ENCODE measurements at regions of chr9 and their contacts with region 1.

Region 1: GRCh38 chr9:121133149-121133816 is 58.5 kb downstream of the CNTRL start:
- DNase-seq: peak; percentile 90
- ATAC-seq: peak; percentile 99
- H3K4me3 Mint-ChIP-seq: peak overlapping the region; percentile 15
- H3K27ac Mint-ChIP-seq: peak overlapping the region; percentile 67
- H3K4me1 Mint-ChIP-seq: peaks cover 48% of the 10 kb centered on the region
- H3K27me3 Mint-ChIP-seq: no peaks in the 10 kb centered on the region

Region 2: DNA sequence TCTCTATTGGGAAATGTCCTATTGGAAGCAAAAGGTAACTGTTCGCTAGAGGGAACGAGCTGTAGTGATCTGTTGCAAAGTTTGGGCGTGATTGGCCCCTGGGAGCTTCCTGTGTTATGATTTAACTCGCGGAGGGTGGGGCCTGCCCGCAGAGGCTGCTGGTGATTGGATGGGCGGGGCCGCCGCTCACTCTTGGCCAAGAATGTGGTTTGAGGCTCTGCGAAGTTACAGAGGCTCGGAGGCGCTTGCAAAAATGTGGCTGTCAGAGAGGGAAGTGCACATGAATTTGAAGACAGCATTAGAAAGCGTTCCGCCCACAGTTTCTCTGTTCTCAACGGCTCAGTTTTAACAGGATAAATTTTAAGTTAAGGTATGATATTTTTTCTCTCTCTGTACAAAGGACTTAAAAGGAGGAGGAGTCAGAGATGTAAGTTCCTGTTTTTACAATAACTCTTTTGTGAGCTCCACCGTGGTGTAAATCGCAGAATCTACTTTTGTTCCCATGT is 11.6 kb before region 1 on chr9:
- CTCF ChIA-PET with region 1: interaction called, 16 read pairs
- DNase-seq: peak; percentile 99
- ATAC-seq: peak; percentile 100
- H3K4me3 Mint-ChIP-seq: peak overlapping the region; percentile 75
- H3K27ac Mint-ChIP-seq: peak overlapping the region; percentile 90
- H3K4me1 Mint-ChIP-seq: peaks cover 37% of the 10 kb centered on the region
- H3K27me3 Mint-ChIP-seq: no peaks in the 10 kb centered on the region